Colonic mucosa (tissue), 4 donors: ENCODE measurements at regions of chr6 and their contacts with region 1.

Region 1: DNA sequence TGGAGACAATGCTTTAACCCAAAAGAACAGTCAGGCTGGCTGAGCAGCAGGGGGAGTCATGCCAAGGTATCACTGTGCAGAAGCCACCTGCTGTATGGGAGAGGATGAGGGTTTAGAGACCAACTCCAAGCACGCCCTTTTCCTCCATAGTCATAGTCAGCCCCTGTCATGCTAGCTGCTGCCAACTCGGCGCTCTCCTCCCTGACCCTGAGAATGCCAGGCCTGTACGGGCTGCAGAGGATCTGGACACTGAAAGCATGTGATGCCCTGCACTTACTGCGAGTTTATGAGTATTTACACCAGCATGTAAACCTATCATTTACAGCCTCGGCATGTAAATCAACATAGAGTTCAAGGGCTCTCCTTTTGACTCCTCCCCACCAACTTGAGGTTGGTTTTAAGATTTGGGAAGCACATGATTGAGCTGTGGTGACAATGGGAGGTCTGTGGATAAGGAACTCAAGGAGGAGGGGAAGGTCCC is 11.7 kb upstream of the SCUBE3 start:
- DNase-seq: peak; percentile 25
- H3K4me3 ChIP-seq: no peak overlapping the region
- H3K27ac ChIP-seq: no peak overlapping the region
- H3K4me1 ChIP-seq: no peaks in the 10 kb centered on the region
- H3K27me3 ChIP-seq: peaks cover 4% of the 10 kb centered on the region
- CTCF ChIP-seq: no peak

Region 2: DNA sequence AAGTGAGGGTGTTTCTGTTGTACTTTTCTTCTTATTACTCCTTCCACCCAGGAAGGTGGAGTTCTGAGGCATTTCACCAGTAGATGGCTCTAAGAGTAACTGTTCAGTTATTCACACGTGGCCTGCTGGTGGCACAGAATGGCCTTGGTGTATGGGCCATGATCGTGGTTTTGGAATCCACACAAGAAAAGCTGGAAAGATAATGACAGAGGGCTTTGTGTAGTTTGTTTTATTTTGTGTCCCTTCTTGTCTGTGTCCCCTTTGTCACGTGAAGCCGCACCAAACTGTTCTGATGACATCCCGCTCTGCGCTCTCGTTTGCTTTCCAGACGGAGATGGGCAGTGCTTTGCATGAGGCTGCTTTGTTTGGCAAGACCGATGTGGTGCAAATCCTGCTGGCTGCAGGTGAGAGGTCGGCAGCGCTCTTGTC is 219.7 kb before region 1 on chr6:
- intact Hi-C with region 1: no loop called
- DNase-seq: no peak
- H3K4me3 ChIP-seq: no peak overlapping the region
- H3K27ac ChIP-seq: no peak overlapping the region
- H3K4me1 ChIP-seq: no peaks in the 10 kb centered on the region
- H3K27me3 ChIP-seq: no peaks in the 10 kb centered on the region
- CTCF ChIP-seq: no peak

Region 3: DNA sequence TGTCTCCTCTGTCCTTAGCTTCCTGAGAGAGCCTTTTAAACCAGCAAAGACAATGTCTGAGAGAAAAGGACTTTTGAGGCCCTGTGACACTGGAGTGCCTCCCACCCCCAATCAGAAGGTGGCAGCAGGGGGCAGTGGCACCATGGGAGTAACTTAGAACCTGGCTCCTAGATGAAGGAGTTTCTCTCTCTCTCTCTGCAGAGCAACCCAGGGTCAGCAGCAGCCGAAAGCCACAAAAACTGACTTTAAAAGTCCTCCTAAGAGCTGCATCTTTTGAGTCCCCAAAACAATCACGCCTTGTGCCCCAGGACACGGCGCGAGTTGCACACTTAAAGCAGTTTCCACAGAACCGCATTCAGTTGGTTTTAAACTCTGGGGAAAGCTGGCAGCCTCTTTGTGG is 55.7 kb before region 1 on chr6:
- intact Hi-C with region 1: loop called (anchors 2 kb)
- DNase-seq: peak; percentile 60
- H3K4me3 ChIP-seq: no peak overlapping the region
- H3K27ac ChIP-seq: no peak overlapping the region
- H3K4me1 ChIP-seq: no peaks in the 10 kb centered on the region
- H3K27me3 ChIP-seq: no peaks in the 10 kb centered on the region
- CTCF ChIP-seq: peak; percentile 48

Region 4: GRCh38 chr6:35161776-35162607 is 40.1 kb before region 1 on chr6:
- intact Hi-C with region 1: loop called (anchors 5 kb)
- DNase-seq: no peak
- H3K4me3 ChIP-seq: no peak overlapping the region
- H3K27ac ChIP-seq: no peak overlapping the region
- H3K4me1 ChIP-seq: peaks cover 14% of the 10 kb centered on the region
- H3K27me3 ChIP-seq: no peaks in the 10 kb centered on the region
- CTCF ChIP-seq: no peak